CD4-positive, alpha-beta memory T cell (primary cell): ENCODE measurements at regions of chr20 and their contacts with region 1.

Region 1: DNA sequence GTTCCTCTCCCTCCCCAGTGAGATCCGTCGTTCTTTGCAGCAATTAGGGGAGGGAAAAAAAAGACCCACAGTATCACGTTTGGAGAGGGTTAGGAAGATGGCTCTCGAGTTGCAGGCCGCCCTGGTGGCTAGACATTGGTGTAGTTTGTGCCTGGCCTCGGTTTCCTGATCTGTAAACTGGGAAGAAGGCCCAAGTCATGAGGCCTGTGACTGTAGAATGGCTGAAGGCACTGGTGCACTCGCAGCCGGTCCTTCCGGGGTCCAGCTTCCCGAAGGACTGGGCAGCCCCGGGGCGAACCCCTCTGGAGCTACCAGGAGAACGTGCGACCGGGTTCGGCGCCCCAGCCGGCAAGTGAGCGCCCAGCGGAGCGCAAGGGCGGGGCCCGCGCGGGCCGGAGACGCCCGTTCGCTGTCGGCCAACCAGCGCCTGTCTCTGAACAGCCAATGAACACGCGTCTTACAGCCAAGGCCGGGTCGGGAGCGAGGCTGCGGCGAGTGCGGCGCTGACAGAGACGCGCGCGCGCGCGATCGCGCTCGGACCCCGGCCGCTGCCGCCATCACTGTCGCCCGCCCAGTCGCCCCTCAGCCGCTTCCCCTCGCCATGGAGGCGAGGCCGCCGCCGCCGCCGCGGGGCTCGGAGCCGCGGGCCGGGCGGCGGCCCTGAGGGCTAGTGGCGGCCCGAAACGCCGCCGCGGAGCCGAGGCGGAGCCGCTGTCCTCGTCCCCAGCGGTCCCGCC is at the start of gene PTPRA:
- DNase-seq: peak; percentile 87 to 91 (median 88)
- H3K4me3 ChIP-seq: peak within 1 kb of the TSS; percentile 84 to 95
- H3K4me3 Mint-ChIP-seq: peak within 1 kb of the TSS; percentile 88 to 96 (median 93)
- H3K27ac ChIP-seq: peak within 1 kb of the TSS; percentile 66
- H3K27ac Mint-ChIP-seq: peak within 1 kb of the TSS; percentile 86 to 95 (median 92)
- H3K4me1 ChIP-seq: peaks cover 25% of the 10 kb centered on the region
- H3K4me1 Mint-ChIP-seq: peaks cover 27 to 53% (median 40%) of the 10 kb centered on the region in 4 donors
- H3K27me3 ChIP-seq: no peaks in the 10 kb centered on the region
- H3K27me3 Mint-ChIP-seq: no peaks in the 10 kb centered on the region
- total RNA-seq, gene PTPRA: 86.6 to 87.8 TPM

Region 2: GRCh38 chr20:2752567-2753460 is 120.4 kb before region 1 on chr20:
- CTCF ChIA-PET with region 1: no interaction called
- POLR2A ChIA-PET with region 1: interaction called, 3 read pairs
- intact Hi-C with region 1: loop called (anchors 5 kb)
- DNase-seq: peak in 4 of 5 donors; percentile 48 to 55 (median 52)
- H3K4me3 ChIP-seq: peak overlapping the region; percentile 28 to 33
- H3K4me3 Mint-ChIP-seq: peak overlapping the region; percentile 81 to 89 (median 86)
- H3K27ac ChIP-seq: no peak overlapping the region
- H3K27ac Mint-ChIP-seq: peak overlapping the region; percentile 57 to 90 (median 74)
- H3K4me1 ChIP-seq: peaks cover 27% of the 10 kb centered on the region
- H3K4me1 Mint-ChIP-seq: peaks cover 16 to 40% (median 28%) of the 10 kb centered on the region in 4 donors
- H3K27me3 ChIP-seq: peaks cover 5% of the 10 kb centered on the region
- H3K27me3 Mint-ChIP-seq: peaks cover 2 to 9% of the 10 kb centered on the region in 2 donors

Region 3: DNA sequence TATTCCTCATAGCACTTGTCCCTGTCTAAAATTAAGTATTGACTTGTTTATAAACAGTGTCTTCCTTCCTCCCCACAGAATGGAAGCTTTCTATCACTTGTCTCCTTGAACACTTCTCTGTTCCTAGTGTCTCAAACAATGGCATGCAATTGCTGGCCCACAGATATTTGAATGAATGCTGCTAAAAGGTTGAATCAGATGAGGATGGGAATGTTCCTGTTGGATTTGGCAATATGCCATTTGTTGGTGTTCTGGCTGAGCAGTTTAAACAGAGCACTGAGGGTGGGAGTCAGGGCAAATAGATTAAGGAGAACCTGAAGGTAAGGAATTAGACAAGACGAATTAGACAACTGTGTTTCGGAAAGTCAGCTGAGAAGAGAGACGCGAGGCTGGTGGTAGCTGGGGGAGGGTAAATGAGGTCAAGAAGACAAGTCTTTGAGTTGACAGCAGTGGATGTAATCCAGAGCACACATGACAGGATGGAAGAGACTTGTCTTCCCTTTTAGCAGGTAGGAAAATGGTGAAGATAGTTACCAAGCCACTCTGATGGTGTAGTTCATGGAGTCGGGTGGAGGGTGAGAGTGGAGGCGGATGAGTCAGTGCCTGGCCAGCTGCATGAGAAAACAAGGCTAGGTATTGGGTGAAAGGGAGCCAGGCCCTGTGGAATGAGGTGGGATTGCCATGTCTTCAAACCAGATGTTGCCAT is 111.9 kb after region 1 on chr20:
- CTCF ChIA-PET with region 1: no interaction called
- POLR2A ChIA-PET with region 1: no interaction called
- intact Hi-C with region 1: loop called (anchors 2 kb)
- DNase-seq: no peak
- H3K4me3 ChIP-seq: no peak overlapping the region
- H3K4me3 Mint-ChIP-seq: no peak overlapping the region
- H3K27ac ChIP-seq: no peak overlapping the region
- H3K27ac Mint-ChIP-seq: no peak overlapping the region
- H3K4me1 ChIP-seq: peaks cover 14% of the 10 kb centered on the region
- H3K4me1 Mint-ChIP-seq: peaks cover 0 to 6% (median 4%) of the 10 kb centered on the region in 4 donors
- H3K27me3 ChIP-seq: no peaks in the 10 kb centered on the region
- H3K27me3 Mint-ChIP-seq: no peaks in the 10 kb centered on the region

Region 4: GRCh38 chr20:3000852-3001523 is 127.8 kb after region 1 on chr20:
- CTCF ChIA-PET with region 1: no interaction called
- POLR2A ChIA-PET with region 1: no interaction called
- intact Hi-C with region 1: loop called (anchors 2 kb)
- DNase-seq: peak; percentile 15 to 60 (median 45)
- H3K4me3 ChIP-seq: no peak overlapping the region
- H3K4me3 Mint-ChIP-seq: no peak overlapping the region
- H3K27ac ChIP-seq: no peak overlapping the region
- H3K27ac Mint-ChIP-seq: peak overlapping the region in 1 of 7 donors; percentile 53
- H3K4me1 ChIP-seq: no peaks in the 10 kb centered on the region
- H3K4me1 Mint-ChIP-seq: peaks cover 0 to 4% (median 2%) of the 10 kb centered on the region in 4 donors
- H3K27me3 ChIP-seq: no peaks in the 10 kb centered on the region
- H3K27me3 Mint-ChIP-seq: no peaks in the 10 kb centered on the region

Region 5: DNA sequence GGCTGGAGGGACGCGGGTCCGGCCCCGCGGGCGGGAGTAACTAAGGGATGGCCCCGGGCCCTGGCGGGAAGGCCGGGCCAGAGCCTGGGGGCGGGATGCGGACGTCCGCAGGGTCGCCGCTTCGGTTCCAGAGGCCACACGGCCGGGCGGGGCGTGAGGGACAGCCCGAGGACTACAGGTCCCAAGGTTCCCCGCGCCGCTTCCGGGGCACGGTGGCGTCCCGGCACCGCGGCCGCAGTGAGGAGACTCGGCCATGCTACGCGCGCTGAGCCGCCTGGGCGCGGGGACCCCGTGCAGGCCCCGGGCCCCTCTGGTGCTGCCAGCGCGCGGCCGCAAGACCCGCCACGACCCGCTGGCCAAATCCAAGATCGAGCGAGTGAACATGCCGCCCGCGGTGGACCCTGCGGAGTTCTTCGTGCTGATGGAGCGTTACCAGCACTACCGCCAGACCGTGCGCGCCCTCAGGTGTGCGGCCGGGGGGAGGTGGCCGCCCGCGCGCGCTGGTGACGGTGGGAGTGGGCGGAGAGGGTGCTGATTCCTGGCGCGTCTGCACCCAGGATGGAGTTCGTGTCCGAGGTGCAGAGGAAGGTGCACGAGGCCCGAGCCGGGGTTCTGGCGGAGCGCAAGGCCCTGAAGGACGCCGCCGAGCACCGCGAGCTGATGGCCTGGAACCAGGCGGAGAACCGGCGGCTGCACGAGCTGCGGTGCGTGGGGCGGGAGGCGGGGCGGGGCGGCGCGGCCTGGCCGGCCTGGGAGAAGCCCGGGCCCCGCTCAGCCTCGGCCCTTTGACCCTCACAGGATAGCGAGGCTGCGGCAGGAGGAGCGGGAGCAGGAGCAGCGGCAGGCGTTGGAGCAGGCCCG is 172.9 kb after region 1 on chr20 and contains the start of gene MRPS26:
- CTCF ChIA-PET with region 1: no interaction called
- POLR2A ChIA-PET with region 1: no interaction called
- intact Hi-C with region 1: loop called (anchors 5 kb)
- DNase-seq: peak; percentile 71 to 82 (median 79)
- H3K4me3 ChIP-seq: peak within 1 kb of the TSS; percentile 66 to 95
- H3K4me3 Mint-ChIP-seq: peak within 1 kb of the TSS; percentile 81 to 92 (median 89)
- H3K27ac ChIP-seq: peak within 1 kb of the TSS; percentile 62
- H3K27ac Mint-ChIP-seq: peak within 1 kb of the TSS; percentile 73 to 94 (median 80)
- H3K4me1 ChIP-seq: peaks cover 26% of the 10 kb centered on the region
- H3K4me1 Mint-ChIP-seq: peaks cover 13 to 30% (median 15%) of the 10 kb centered on the region in 4 donors
- H3K27me3 ChIP-seq: no peaks in the 10 kb centered on the region
- H3K27me3 Mint-ChIP-seq: no peaks in the 10 kb centered on the region
- total RNA-seq, gene MRPS26: 31.6 to 32.2 TPM

Region 6: DNA sequence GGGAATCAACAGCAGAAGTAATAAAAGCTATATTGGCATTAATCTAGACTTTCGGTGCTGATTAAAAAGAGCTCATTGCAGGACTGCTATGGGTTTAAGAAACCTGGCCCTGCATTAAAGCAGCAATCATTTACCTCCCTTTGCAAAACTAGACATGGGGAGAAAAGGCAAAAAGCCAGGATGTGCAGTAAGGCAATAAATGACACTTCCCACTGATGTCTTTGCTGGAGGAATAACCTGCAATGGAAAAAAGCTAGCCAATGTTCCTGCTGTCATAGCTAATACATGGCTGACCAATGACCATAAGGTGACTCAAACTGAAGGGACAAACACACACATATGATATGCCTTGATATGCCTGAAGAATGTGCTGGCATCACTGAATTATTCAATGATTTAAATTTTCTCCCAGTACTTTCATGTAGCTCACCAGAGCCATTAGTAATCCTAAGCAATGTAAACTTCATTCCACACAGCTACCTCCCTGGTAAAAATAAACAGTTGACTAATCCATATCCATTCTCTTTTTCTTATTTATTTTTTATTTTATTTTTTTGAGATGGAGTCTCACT is 525.6 kb after region 1 on chr20:
- CTCF ChIA-PET with region 1: no interaction called
- POLR2A ChIA-PET with region 1: no interaction called
- intact Hi-C with region 1: no loop called
- DNase-seq: no peak
- H3K4me3 ChIP-seq: no peak overlapping the region
- H3K4me3 Mint-ChIP-seq: no peak overlapping the region
- H3K27ac ChIP-seq: no peak overlapping the region
- H3K27ac Mint-ChIP-seq: no peak overlapping the region
- H3K4me1 ChIP-seq: no peaks in the 10 kb centered on the region
- H3K4me1 Mint-ChIP-seq: peaks cover 0 to 9% (median 5%) of the 10 kb centered on the region in 4 donors
- H3K27me3 ChIP-seq: no peaks in the 10 kb centered on the region
- H3K27me3 Mint-ChIP-seq: no peaks in the 10 kb centered on the region